HepG2 (cell line): ENCODE measurements at regions of chr12 and their contacts with region 1.

Region 1: GRCh38 chr12:18250313-18250916 is 10.9 kb upstream of the PIK3C2G start:
- DNase-seq: peak; percentile 59
- ATAC-seq: no peak
- H3K4me3 ChIP-seq: no peak overlapping the region
- H3K27ac ChIP-seq: no peak overlapping the region
- H3K4me1 ChIP-seq: no peaks in the 10 kb centered on the region
- H3K27me3 ChIP-seq: no peaks in the 10 kb centered on the region
- CTCF ChIP-seq: peak; percentile 69
- EP300 ChIP-seq: no peak
- POLR2A ChIP-seq: no peak
- RAD21 ChIP-seq: no peak; the same call in 1 of the 2 replicates

Region 2: DNA sequence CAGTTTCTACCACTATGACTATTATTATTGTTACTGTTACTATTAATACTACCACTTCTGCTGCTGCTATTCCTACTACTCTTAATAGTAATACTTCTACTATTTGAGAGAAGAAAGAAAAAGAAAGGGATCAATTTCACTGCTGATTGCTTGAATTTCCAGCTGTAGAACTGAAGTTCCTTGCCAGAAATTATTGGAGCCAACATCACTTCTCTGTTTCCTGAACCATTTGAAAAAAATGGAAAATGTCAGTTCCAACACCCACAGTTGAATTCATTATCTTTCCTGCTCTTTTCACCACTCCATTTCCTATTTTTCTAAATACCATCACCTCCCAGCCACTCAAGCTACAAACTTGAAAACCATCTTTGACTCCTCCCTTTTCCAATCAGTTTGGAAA is 43.1 kb before region 1 on chr12:
- CTCF ChIA-PET with region 1: no interaction called
- POLR2A ChIA-PET with region 1: no interaction called
- in situ Hi-C with region 1: no loop called
- intact Hi-C with region 1: no loop called
- DNase-seq: no peak
- ATAC-seq: no peak
- H3K4me3 ChIP-seq: no peak overlapping the region
- H3K27ac ChIP-seq: no peak overlapping the region
- H3K4me1 ChIP-seq: no peaks in the 10 kb centered on the region
- H3K27me3 ChIP-seq: no peaks in the 10 kb centered on the region
- CTCF ChIP-seq: no peak
- EP300 ChIP-seq: no peak
- POLR2A ChIP-seq: no peak
- RAD21 ChIP-seq: no peak

Region 3: GRCh38 chr12:18320036-18320617 is 69.7 kb after region 1 on chr12:
- CTCF ChIA-PET with region 1: interaction called, 18 read pairs
- POLR2A ChIA-PET with region 1: no interaction called
- in situ Hi-C with region 1: no loop called
- intact Hi-C with region 1: loop called (anchors 1 kb)
- DNase-seq: peak; percentile 74
- ATAC-seq: peak; percentile 99
- H3K4me3 ChIP-seq: no peak overlapping the region
- H3K27ac ChIP-seq: no peak overlapping the region
- H3K4me1 ChIP-seq: no peaks in the 10 kb centered on the region
- H3K27me3 ChIP-seq: no peaks in the 10 kb centered on the region
- CTCF ChIP-seq: peak; percentile 73
- EP300 ChIP-seq: no peak
- POLR2A ChIP-seq: no peak
- RAD21 ChIP-seq: 0 out of 2 replicates have a peak, but pooled peaks have one; percentile 28

Region 4: DNA sequence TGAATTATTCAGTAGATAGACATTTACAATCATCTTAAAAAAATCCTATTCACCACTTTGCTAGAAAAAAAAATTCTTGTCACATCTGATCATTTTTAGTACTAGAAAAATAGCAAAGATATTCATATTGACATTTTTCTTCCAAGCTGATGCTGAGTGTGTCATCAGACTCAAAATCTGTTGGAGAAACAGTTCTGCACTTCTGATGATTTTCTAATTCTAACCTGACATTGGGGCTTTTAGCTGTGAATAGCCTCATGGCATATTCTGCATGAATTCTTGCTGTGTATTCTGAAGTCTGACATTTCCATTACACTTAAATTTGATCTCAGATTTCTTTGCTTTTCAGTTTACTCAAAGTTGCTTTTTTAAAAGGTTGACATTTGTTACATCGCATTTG is 161.0 kb after region 1 on chr12:
- CTCF ChIA-PET with region 1: no interaction called
- POLR2A ChIA-PET with region 1: no interaction called
- in situ Hi-C with region 1: no loop called
- intact Hi-C with region 1: no loop called
- DNase-seq: no peak
- ATAC-seq: no peak
- H3K4me3 ChIP-seq: no peak overlapping the region
- H3K27ac ChIP-seq: no peak overlapping the region
- H3K4me1 ChIP-seq: no peaks in the 10 kb centered on the region
- H3K27me3 ChIP-seq: no peaks in the 10 kb centered on the region
- CTCF ChIP-seq: no peak
- EP300 ChIP-seq: no peak
- POLR2A ChIP-seq: no peak
- RAD21 ChIP-seq: no peak